Aorta (tissue), 5 donors: ENCODE measurements at regions of chr1 and their contacts with region 1.

Region 1: DNA sequence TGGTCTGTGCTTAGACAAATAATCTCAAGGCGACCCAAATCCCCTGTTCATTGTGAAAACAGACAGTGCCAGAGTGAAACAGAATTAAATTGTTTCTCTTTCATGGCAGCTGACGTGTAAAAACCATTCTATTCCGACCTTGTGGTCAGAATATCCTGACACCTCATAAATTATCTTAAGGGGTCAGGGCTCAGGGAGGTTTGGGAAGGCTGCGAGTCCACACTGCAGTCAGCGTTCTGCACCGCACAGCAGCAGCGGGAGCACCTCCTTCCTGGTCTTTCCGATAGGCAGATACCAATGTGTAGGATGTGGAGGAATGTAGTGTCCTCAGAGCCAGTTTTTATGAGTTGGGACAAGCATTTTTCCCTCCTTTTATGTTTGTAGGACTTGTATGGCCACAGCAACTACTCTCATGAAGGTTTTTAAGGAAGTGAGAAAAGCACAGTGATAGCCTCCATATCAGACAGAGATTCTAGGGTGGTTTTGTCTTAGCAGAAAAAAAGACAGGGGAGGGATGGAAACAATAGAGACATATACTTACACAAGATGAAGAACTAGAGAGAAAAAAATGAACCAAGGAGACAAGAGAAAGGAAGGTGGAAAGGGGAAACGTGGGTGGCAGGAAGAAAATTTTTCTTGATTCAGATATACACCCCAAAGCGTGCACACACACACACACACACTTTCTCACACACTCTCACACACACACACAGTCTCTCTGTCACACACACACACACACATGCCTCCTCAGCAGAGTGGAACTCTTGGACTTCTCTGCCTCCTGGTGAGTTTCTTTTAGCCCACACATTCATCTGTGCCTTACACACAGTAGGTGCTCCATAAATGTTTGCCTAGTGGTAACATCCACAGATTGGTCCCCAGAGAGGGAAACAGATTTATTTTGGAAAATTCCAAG is 68.6 kb downstream of the NTMT2 start:
- DNase-seq: peak in 1 of 2 donors; percentile 53
- ATAC-seq: peak; percentile 62
- H3K4me3 ChIP-seq: no peak overlapping the region
- H3K27ac ChIP-seq: peak overlapping the region; percentile 88 to 98
- H3K4me1 ChIP-seq: peaks cover 8 to 10% of the 10 kb centered on the region in 2 donors
- H3K27me3 ChIP-seq: no peaks in the 10 kb centered on the region

Region 2: DNA sequence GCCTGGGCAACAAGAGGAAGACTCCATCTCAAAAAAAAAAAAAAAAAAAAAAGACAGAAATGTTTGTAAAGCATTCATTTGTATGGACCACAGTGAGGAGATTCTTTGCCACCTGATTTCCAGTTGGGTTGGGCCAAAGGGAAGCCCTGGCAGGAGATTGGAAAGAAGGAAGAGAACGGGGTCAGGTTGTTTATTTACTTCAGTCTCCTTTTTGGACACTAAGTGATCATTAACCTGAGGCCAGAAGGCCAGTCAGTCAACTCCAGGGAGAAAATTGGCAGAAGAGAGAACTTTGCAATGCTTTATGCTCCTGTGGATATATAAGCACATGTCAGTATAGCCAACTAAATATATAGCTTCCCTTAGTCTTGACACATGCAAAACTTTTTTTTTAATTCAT is 17.3 kb after region 1 on chr1:
- intact Hi-C with region 1: no loop called
- DNase-seq: no peak
- ATAC-seq: no peak
- H3K4me3 ChIP-seq: no peak overlapping the region
- H3K27ac ChIP-seq: no peak overlapping the region
- H3K4me1 ChIP-seq: no peaks in the 10 kb centered on the region
- H3K27me3 ChIP-seq: no peaks in the 10 kb centered on the region

Region 3: DNA sequence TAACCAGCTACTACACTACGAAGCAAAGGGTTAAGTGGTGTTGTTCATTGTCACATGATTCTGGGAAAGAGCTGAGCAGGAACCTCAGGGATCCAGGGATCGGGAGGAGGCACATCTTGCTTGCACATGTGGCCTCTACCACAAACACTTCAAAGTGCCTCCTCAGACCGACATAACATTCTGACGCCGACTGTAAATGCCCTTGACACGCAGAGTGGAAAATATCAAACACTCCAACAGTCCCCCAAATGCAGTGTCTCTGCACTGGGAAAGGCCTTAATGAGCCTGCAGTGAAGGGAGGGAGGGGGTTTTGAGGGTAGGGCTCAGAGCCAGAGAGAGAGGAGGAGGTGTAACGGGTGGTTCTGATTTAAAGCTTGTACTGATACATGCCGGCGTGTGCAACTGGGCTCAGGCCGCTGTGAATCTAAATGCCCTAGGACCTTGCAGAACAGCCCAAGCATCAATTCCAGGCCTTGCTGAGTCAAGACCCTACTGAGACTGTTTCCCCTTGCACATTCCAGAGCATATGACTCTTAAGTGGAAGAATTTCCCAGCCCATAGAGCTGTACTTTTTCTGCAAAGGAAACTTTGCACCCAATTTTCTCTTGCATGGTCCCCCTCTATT is 95.1 kb after region 1 on chr1:
- intact Hi-C with region 1: loop called in 1 of 2 experiments (anchors 10 kb)
- DNase-seq: peak in 1 of 2 donors; percentile 67
- ATAC-seq: peak; percentile 80
- H3K4me3 ChIP-seq: no peak overlapping the region
- H3K27ac ChIP-seq: peak overlapping the region in 1 of 2 donors; percentile 47
- H3K4me1 ChIP-seq: peaks cover 0 to 10% of the 10 kb centered on the region in 2 donors
- H3K27me3 ChIP-seq: no peaks in the 10 kb centered on the region

Region 4: GRCh38 chr1:170436928-170437327 is 222.6 kb after region 1 on chr1:
- intact Hi-C with region 1: no loop called
- DNase-seq: no peak
- ATAC-seq: no peak
- H3K4me3 ChIP-seq: no peak overlapping the region
- H3K27ac ChIP-seq: no peak overlapping the region
- H3K4me1 ChIP-seq: no peaks in the 10 kb centered on the region
- H3K27me3 ChIP-seq: no peaks in the 10 kb centered on the region